HEK293 (cell line): ENCODE measurements at regions of chr19 and their contacts with region 1.

Region 1: DNA sequence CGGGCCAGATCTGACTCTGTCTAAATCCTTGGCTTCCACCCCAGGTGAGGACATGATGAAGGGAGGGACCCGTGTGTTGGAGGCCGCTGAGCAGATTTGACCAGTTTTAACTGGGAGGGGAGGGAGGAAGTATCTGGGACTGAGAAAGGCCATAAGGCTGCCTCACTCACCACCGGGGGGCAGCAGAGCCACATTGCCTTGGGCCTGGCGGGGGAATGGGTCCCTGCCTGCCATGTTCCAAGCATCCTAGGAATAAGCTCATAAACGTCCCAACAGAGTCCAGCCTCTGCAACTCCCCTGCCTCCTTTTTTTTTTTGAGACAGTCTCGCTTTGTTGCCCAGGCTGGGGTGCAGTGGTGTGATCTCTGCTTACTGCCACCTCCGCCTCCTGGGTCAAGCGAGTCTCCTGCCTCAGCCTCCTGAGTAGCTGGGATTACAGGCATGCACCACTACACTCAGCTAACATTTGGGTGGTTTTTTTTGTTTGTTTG is 15.5 kb downstream of the MAST3 start:
- H3K4me3 ChIP-seq: no peak overlapping the region
- H3K27ac ChIP-seq: no peak overlapping the region
- H3K4me1 ChIP-seq: peaks cover 3% of the 10 kb centered on the region; the same call in 1 of the 2 replicates
- CTCF ChIP-seq: peak; percentile 90

Region 2: DNA sequence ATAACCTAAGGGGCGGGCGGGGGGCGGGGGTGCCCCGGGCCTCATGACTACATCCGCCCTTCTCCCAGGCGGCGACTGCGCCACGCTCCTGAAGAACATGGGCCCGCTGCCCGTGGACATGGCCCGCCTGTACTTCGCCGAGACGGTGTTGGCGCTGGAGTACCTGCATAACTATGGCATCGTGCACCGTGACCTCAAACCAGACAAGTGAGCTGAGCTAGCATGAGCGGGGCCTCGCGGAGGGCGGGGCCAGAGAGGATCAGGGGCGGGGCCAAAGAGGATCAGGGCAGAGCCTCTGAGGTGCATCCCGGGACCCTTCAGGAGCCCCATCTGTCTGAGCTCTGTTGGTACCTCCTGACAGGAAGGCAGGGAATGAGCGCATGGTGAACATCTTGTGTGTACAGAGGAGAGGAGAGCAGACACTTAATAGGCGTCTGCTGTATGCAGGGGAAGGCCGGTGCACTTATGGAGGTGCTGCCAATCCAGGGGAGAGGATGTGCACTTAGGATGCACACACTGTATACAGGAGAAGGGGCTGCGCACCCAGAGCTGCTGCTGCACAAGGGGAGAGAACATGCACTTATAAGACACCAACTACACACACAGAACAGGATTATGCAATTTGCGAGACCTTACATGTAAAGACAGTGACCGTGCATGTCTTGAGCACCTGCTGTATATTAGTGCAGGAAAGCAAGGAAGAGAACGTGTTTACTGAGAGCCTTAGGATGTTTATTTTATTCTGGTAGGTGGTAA is 19.0 kb after region 1 on chr19:
- CTCF ChIA-PET with region 1: interaction called, 10 read pairs
- POLR2A ChIA-PET with region 1: interaction called, 4 read pairs
- H3K4me3 ChIP-seq: no peak overlapping the region
- H3K27ac ChIP-seq: no peak overlapping the region
- H3K4me1 ChIP-seq: no peaks in the 10 kb centered on the region
- CTCF ChIP-seq: no peak

Region 3: GRCh38 chr19:18160971-18161635 is 48.1 kb after region 1 on chr19:
- CTCF ChIA-PET with region 1: interaction called, 83 read pairs
- POLR2A ChIA-PET with region 1: interaction called, 3 read pairs
- H3K4me3 ChIP-seq: peak overlapping the region; percentile 17
- H3K27ac ChIP-seq: peak overlapping the region; percentile 28; the same call in 1 of the 2 replicates
- H3K4me1 ChIP-seq: peaks cover 12% of the 10 kb centered on the region
- CTCF ChIP-seq: no peak

Region 4: GRCh38 chr19:18192673-18193387 is 79.8 kb after region 1 on chr19 and contains the start of gene MPV17L2:
- CTCF ChIA-PET with region 1: interaction called, 16 read pairs
- POLR2A ChIA-PET with region 1: interaction called, 3 read pairs
- H3K4me3 ChIP-seq: peak within 1 kb of the TSS; percentile 76
- H3K27ac ChIP-seq: peak within 1 kb of the TSS; percentile 40; the same call in 1 of the 2 replicates
- H3K4me1 ChIP-seq: no peaks in the 10 kb centered on the region
- CTCF ChIP-seq: no peak

Region 5: GRCh38 chr19:18211683-18212082 is 98.6 kb after region 1 on chr19:
- CTCF ChIA-PET with region 1: no interaction called
- POLR2A ChIA-PET with region 1: no interaction called
- H3K4me3 ChIP-seq: no peak overlapping the region
- H3K27ac ChIP-seq: no peak overlapping the region
- H3K4me1 ChIP-seq: no peaks in the 10 kb centered on the region
- CTCF ChIP-seq: no peak